ENCODE measurements at regions of chr14 and their contacts with region 1.

Region 1: DNA sequence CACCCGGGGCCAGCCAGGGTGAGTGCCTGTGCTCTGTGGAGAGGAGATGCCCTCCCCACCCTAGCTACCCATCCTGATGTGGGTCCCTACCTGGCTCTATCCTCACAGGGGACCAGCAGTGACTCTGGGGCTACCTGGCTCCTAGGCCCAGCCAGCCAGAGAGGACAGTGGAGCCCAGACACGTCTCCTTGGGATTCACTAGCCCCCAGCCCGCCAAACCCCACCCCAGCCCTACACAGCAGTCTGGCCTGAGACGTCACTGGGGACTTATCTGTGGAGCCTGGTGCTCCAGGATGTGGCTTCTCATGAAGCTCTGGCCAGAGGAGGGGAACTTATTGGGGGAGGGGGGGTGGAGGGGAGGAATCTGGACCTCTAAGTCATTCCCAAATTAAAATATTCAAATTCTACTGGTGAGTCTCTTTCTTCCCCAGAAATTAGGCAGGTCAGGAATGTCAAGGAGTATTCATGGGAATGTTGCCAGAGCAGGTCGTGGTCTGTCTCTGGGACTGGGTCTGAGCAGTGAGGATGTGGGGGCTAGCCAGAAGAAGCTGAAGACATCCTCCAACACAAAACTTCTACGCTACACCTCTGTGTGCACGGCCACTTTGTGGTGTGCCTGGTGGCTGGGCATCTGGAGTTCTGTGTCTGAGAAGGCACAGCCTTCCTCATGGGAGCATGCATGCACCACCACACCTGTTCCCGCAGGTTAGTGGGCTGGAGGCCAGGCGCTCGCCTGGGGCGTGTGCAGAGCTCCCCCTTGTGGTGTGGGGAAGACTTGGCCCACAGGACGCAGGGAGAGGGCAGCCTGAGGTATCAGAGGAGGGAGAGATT is 2.7 kb downstream of the CMTM5 start:
- DNase-seq: peak in 4 of 10 donors; percentile 43 to 91 (median 64)

Region 2: GRCh38 chr14:23320774-23321571 is 58.6 kb before region 1 on chr14 and contains the start of gene PABPN1:
- intact Hi-C with region 1: loop called (anchors 2 kb)
- DNase-seq: peak; percentile 98 to 100 (median 99)

Region 3: GRCh38 chr14:23327947-23328744 is 51.4 kb before region 1 on chr14:
- intact Hi-C with region 1: loop called (anchors 1 kb)
- DNase-seq: peak in 7 of 10 donors; percentile 65 to 89 (median 80)

Region 4: DNA sequence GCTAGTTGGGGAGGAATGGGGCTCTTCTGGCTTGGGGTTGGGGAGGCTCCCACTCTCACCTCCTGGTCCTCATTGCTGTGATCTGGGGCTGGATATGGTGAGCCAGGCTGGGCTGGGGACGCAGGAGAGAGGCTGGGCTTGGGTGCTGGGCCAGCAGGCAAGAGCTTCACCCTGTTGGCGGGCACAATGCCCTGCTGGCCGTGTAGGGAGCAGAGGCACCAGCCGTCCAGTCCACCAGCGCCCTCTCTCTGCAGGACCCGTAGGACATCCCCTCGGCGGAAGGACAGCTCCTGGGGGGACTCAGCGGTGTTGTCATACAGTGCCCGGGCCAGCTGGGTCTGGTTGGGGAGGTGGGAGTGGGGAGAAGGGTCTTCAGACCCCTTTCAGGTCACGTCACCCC is 19.1 kb before region 1 on chr14:
- intact Hi-C with region 1: loop called (anchors 2 kb)
- DNase-seq: peak in 9 of 10 donors; percentile 49 to 97 (median 77)

Region 5: GRCh38 chr14:23366426-23366921 is 13.1 kb before region 1 on chr14:
- intact Hi-C with region 1: loop called (anchors 1 kb)
- DNase-seq: peak; percentile 53 to 95 (median 70)

Region 6: GRCh38 chr14:23446291-23446851 is 66.8 kb after region 1 on chr14:
- intact Hi-C with region 1: no loop called
- DNase-seq: peak in 1 of 10 donors; percentile 52

Region 7: DNA sequence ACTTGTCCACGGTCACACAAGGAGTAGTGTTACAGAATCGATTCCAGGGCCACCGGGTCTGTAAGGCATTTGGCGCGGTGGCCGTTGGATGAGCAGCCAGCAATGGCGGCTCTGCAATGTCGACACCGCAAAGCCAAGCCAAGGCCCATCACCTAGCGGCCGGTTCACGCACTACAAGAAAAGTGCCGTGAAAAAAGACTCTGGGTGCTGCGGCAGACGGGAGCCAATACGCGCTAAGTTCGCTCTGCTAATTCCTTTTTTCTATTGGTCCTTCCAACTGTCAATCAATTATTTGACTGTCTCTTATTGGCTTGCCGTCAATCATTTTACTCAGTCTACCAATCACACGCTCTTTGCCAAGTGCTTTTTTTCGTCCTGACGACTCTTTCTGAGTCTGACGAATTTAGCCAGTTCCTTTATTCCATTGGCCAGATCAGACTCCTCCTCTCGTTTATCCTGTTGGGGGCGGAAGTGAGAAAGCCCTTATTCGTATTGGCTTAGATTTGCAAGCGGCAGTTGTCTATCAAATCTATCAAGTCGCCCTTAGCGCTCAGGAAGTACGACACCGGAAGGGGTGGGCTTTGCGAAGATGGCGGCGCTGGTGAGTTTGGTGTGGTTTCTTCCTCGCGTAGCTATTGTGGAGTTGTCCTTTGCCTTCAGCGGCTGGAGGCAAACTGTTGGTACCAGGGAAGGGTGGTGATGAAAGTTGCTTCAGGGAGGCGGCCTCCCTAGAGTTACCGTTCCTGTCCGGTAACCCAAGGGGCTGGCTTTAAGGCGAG is 89.7 kb after region 1 on chr14 and contains the start of gene NGDN:
- intact Hi-C with region 1: loop called (anchors 5 kb)
- DNase-seq: peak; percentile 94 to 99 (median 98)

Measured in posterior cingulate gyrus (tissue), 11 donors.